ENCODE measurements at regions of chr20 and their contacts with region 1.

Region 1: DNA sequence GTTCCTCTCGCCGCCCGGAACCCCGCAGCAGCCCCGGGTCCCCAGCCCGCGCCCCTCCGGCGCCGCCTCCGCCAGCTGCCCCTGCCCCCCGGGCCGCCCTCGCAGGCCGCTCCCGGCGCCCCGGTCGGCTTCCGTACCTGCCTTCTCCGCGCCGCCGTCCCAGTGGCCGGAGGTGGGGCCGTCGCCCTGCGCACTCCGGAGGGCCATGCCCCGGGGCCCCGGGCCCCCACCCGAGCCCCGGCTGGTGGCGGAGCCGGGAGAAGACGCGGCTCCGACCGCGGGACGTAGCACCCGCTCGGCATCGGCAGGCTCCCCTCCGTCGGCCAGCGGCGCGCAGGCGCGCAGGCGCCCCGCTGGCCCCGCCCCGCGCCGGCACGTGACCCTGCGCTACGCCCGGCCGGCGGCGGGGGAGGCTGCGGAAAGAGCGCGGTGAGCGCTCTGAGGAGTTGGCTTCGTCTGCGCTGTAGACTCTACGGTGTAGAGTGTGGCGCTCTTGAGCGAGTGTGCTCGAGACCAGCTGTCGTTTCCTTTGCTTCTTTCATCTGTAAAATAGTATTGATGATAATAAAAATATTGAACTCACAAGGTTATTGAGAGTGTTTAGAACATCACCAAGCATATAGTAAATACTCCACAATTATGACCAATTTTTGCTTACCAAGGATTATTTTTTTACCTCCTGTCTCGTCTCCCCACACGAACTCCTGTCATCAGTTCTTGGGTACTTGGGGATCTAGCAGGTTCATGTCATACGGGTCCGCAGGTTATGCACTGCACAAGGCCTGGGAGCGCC is at the start of gene TBC1D20:
- DNase-seq: peak; percentile 92
- total RNA-seq, gene TBC1D20: 26.5 TPM

Region 2: DNA sequence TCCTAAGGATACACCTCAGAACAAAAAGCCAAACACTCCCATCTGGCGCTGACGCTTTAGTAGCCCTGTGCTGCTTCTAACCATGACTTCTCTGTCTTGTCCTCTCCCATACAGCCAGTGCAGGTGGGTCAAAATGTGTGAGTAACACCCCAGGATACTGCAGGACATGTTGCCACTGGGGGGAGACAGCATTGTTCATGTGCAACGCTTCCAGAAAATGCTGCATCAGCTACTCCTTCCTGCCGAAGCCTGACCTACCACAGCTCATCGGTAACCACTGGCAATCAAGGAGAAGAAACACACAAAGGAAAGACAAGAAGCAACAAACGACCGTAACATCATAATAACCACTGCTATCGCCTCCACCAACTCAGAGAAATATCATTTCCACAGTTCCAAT is 203.4 kb before region 1 on chr20:
- intact Hi-C with region 1: no loop called
- DNase-seq: no peak

Region 3: DNA sequence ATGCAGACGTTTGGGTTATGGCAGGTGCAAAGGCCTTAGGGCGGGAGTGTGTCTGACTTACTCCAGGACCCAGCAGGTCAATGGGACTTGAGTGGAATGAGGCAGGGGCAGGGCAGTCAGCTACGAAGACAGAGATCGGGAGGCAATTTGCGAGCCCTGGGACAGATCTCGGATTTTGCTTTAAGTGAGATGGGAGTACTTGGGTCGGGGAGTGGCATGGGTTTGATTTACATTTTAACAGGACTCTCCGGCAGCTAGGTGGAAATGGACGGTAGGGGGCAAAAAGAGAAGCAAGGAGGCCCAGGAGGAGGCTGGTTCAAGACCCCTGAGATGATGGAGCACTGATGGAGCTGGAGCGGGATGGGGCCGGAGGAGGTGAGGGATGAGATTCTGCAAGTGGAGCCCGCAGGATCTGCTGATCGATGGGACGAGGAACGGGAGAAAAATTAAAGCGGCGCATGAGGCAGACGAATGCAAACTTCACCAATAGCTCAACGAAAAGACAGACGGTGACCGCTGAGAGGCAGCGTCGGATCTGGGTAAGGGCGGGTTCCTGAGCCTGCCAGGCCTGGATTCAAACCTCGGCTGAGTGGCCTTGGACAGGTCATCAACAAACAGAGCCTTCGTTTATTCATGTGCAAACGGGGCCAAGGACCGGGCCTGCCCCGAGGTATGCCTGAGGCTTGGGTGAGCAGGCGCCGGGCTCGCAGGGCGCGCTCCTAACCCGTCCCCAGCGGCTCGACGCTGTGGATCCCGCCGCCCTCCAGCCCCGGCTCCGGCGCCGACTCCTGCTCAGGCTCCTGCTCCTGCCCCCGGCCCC is 55.1 kb before region 1 on chr20:
- intact Hi-C with region 1: loop called (anchors 5 kb)
- DNase-seq: peak; percentile 83

Region 4: DNA sequence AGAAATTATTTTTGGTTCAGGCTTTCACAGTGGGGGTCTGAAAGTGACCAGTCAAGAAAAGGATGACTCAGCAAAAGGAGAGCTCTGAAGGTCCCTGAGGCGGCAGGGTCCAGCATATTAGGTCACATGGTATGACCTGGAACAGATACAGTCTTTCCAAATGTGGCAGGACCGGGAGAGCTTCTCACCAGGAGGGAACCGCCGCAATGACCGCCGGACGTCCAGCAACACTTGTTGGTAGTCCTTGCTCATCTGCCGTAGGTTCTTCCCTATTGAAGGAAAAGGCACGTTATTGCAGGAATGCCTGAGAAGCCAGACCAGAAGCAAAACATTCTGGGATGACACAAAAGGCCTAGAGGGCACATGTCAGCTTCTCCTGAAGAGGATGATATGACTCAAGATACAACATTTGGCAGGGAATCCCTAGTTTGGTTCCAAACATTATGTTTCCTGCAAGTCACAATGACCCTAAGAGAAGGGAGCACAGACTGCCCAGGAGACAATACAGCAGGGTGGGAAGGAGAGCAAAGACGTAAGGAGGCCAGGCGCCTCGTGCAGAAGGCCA is 17.5 kb before region 1 on chr20:
- intact Hi-C with region 1: loop called (anchors 2 kb)
- DNase-seq: no peak

Region 5: DNA sequence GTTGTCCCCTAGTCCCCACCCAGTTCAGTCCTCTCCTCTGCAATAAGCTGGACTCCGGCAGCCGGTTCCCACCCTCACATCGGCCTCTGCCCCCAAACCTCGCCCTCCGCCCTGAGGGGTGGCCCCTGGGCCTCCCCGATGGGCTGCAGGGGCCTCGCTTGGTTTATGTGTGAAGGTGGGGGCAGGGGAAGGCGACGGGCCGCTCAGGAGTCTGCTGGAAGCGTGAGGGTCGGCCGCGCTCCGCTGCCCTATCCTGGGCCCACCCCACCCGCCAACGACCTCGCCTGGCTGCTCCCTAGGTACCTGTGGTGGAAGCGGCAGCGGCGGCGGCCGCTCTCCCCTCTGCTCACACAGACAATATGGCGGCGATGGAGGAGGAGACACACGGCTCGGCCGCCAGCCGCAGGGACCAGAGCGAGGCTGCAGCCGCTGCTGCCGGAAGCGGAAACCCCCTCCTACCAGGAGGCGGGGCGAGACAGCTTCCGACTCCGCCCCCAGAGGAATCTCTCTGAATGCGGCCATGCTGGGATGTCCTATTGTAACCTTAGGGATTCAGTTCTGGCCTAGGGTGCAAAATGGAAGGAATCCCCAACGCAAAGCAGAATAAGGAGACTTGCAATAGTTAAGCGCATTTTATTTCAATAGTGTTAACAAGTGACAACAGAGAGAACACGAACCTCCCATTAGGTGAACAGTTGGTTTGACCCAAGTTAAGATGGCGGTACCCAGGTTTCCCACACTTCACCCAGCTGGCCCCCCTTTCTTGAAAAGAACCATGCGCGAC is 81.2 kb after region 1 on chr20 and contains the start of gene CSNK2A1:
- intact Hi-C with region 1: loop called (anchors 5 kb)
- DNase-seq: peak; percentile 98
- total RNA-seq, gene CSNK2A1: 111 TPM

Measured in cardiac septum (tissue), 1 donor.